IMR-90 (cell line): ENCODE measurements at regions of chr9 and their contacts with region 1.

Region 1: DNA sequence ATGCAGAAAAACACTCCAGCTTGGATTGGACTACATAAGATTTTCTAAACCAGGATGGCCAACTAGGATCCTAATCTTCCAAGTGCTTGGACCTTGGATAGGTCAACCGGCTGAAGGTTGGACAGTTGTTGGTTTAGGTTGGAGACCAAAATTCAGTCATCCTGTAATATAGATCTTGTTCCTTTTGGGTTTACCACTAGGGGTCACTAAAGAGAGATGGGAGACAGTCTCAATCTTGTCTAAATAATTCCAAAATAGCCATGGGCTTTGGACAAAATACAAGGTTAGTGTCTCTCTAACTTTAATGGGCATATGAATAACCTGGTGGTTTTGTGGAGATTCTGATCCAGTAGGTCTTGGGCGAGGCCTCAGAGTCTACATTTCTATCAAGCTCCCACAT is 148.7 kb upstream of the ERCC6L2 start:
- DNase-seq: peak; percentile 59
- ATAC-seq: peak; percentile 89
- H3K4me3 ChIP-seq: no peak overlapping the region
- H3K27ac ChIP-seq: no peak overlapping the region
- H3K4me1 ChIP-seq: peaks cover 2% of the 10 kb centered on the region; the same call in 1 of the 2 replicates
- H3K27me3 ChIP-seq: peaks cover 15% of the 10 kb centered on the region
- CTCF ChIP-seq: peak; percentile 69
- POLR2A ChIP-seq: no peak
- RAD21 ChIP-seq: peak; percentile 74

Region 2: GRCh38 chr9:95516734-95517558 is 209.8 kb before region 1 on chr9 and contains the start of gene PTCH1:
- CTCF ChIA-PET with region 1: no interaction called
- POLR2A ChIA-PET with region 1: no interaction called
- dilution Hi-C with region 1: no loop called
- in situ Hi-C with region 1: no loop called
- intact Hi-C with region 1: loop called (anchors 5 kb)
- DNase-seq: peak; percentile 52
- ATAC-seq: peak; percentile 71
- H3K4me3 ChIP-seq: peak within 1 kb of the TSS; percentile 58
- H3K27ac ChIP-seq: 0 out of 2 replicates have a peak within 1 kb of the TSS, but pooled peaks have one; percentile 12
- H3K4me1 ChIP-seq: peaks cover 4% of the 10 kb centered on the region
- H3K27me3 ChIP-seq: peaks cover 28% of the 10 kb centered on the region
- CTCF ChIP-seq: no peak
- POLR2A ChIP-seq: no peak
- RAD21 ChIP-seq: no peak
- total RNA-seq, gene PTCH1: 4.1 and 5.3 TPM in 2 replicates

Region 3: DNA sequence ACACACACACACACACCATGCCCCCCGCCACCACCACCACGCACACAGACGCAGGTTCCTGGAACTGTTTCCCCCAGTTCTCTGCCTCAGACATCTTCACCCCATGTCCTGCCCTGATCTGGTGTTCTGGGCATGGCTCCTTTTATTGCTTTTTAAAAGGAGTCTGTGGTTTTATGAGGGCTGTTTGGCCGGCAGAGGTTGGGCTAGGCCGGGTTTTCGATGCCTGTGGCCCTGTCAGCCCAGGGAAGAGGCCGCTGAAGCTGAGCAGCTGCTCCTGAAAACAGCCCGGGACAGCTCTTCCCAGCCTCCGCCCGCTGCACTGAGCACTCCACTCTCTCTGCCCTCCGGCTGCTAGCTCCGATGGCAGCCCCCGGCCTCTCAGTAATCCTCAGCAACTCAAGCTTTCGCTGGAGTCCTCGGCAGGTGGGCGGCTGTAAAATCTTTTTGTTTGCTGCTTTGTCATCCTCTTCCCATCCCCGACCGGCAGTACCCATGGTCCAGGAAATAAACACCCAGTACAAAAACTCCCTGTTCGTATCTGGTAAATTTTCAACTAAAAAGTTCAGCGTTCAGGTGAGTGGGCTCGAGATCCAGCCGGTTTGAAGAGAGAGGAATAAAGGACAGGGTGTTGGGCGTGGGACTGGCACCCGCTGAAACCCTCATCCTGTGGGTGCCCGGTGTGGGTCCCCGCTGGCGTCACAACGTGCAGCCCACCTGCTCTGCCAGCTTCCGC is 45.7 kb after region 1 on chr9:
- CTCF ChIA-PET with region 1: no interaction called
- POLR2A ChIA-PET with region 1: no interaction called
- dilution Hi-C with region 1: no loop called
- in situ Hi-C with region 1: no loop called
- intact Hi-C with region 1: loop called (anchors 2 kb)
- DNase-seq: peak; percentile 65
- ATAC-seq: peak; percentile 90
- H3K4me3 ChIP-seq: no peak overlapping the region
- H3K27ac ChIP-seq: peak overlapping the region; percentile 51; the same call in 1 of the 2 replicates
- H3K4me1 ChIP-seq: peaks cover 24% of the 10 kb centered on the region
- H3K27me3 ChIP-seq: peaks cover 26% of the 10 kb centered on the region
- CTCF ChIP-seq: no peak
- POLR2A ChIP-seq: no peak
- RAD21 ChIP-seq: 0 out of 2 replicates have a peak, but pooled peaks have one; percentile 9

Region 4: DNA sequence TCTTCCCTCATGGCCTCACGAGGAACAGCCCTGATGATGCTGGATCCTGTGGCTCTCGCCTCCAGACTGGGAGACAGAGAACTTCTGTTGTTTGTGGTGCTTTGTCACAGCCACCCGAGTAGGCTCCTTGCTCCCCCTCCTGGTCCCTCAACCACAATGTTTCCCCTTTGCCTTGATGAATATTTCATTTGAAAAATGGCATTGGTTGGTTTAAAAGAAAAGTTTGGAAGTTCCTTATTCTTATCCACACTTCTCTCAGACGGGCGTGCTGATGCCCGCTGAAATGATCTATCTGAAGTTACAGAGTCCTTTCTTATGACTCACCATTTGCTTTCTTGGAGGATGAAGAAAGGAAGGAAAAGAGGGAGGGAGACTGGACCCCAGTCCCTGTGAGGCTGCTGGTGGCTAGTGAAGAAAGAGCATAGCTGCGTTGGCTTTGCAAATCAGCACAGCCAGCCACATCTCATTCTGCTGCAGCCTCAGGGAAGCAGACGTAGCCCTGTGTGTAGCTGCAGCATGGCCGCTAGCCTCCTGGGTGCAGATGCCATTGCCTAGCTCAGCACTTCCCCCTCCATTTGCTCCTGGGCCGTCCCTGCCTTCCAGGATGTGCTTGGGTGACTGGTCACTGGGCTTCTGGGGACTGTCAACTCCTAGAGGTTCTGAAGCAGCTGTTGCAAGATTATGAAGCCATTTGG is 334.7 kb after region 1 on chr9:
- CTCF ChIA-PET with region 1: no interaction called
- POLR2A ChIA-PET with region 1: no interaction called
- dilution Hi-C with region 1: no loop called
- in situ Hi-C with region 1: no loop called
- intact Hi-C with region 1: loop called (anchors 2 kb)
- DNase-seq: peak; percentile 41
- ATAC-seq: peak; percentile 87
- H3K4me3 ChIP-seq: no peak overlapping the region
- H3K27ac ChIP-seq: no peak overlapping the region
- H3K4me1 ChIP-seq: peaks cover 2% of the 10 kb centered on the region; the same call in 1 of the 2 replicates
- H3K27me3 ChIP-seq: peaks cover 5% of the 10 kb centered on the region; the same call in 1 of the 2 replicates
- CTCF ChIP-seq: peak; percentile 49
- POLR2A ChIP-seq: no peak
- RAD21 ChIP-seq: peak; percentile 60

Region 5: GRCh38 chr9:96317335-96317980 is 590.7 kb after region 1 on chr9:
- CTCF ChIA-PET with region 1: no interaction called
- POLR2A ChIA-PET with region 1: no interaction called
- dilution Hi-C with region 1: no loop called
- in situ Hi-C with region 1: no loop called
- intact Hi-C with region 1: loop called (anchors 2 kb)
- DNase-seq: peak; percentile 70
- ATAC-seq: peak; percentile 90
- H3K4me3 ChIP-seq: no peak overlapping the region
- H3K27ac ChIP-seq: no peak overlapping the region
- H3K4me1 ChIP-seq: no peaks in the 10 kb centered on the region
- H3K27me3 ChIP-seq: no peaks in the 10 kb centered on the region
- CTCF ChIP-seq: peak; percentile 93
- POLR2A ChIP-seq: no peak
- RAD21 ChIP-seq: peak; percentile 84